Calu3 (cell line): ENCODE measurements at regions of chr10 and their contacts with region 1.

Region 1: GRCh38 chr10:67788025-67788886 is 49.7 kb downstream of the DNAJC12 start:
- DNase-seq: peak; percentile 88
- H3K4me3 Mint-ChIP-seq: peak overlapping the region; percentile 14
- H3K27ac Mint-ChIP-seq: peak overlapping the region; percentile 6
- H3K4me1 Mint-ChIP-seq: peaks cover 25% of the 10 kb centered on the region
- H3K27me3 Mint-ChIP-seq: no peaks in the 10 kb centered on the region
- CTCF ChIP-seq: peak; percentile 89

Region 2: GRCh38 chr10:67818320-67818719 is 30.1 kb after region 1 on chr10:
- CTCF ChIA-PET with region 1: interaction called, 8 read pairs
- intact Hi-C with region 1: loop called (anchors 2 kb)
- DNase-seq: peak; percentile 65
- H3K4me3 Mint-ChIP-seq: no peak overlapping the region
- H3K27ac Mint-ChIP-seq: peak overlapping the region; percentile 75
- H3K4me1 Mint-ChIP-seq: peaks cover 39% of the 10 kb centered on the region
- H3K27me3 Mint-ChIP-seq: no peaks in the 10 kb centered on the region
- CTCF ChIP-seq: no peak

Region 3: DNA sequence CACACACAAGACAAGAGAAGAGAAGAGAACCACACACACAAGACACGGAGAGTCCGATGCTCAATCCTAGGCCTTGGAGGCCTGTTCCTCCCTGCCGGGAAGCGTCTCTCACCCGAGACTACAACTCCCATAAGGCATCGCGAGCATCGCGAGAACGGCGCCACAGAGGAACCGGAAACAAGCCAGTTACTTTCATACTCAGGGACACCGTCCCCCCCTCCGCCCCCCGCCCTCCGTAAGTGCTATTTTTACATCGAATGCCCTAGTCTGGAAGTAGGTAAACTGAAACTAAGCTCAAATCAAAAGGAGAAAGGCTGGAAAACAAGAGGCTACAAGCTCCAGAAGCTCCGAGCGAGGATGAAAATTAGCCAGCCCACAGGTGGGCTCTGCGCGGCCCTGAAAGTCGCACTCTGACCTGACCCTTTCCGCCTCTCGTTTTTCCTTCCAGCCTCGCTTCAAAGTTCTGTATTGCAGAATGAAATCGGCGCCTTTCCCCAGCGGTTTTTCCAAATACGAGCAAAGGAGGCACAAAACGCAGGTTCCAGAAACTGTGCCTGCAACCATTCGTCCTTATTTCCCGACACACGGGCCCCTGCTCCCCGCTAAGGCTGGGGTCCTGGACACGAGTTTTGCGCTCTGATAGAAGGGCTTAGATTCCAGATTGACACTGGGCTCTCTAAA is 61.2 kb after region 1 on chr10:
- CTCF ChIA-PET with region 1: interaction called, 4 read pairs
- intact Hi-C with region 1: loop called (anchors 2 kb)
- DNase-seq: peak; percentile 94
- H3K4me3 Mint-ChIP-seq: peak overlapping the region; percentile 89
- H3K27ac Mint-ChIP-seq: peak overlapping the region; percentile 69
- H3K4me1 Mint-ChIP-seq: no peaks in the 10 kb centered on the region
- H3K27me3 Mint-ChIP-seq: no peaks in the 10 kb centered on the region
- CTCF ChIP-seq: no peak

Region 4: DNA sequence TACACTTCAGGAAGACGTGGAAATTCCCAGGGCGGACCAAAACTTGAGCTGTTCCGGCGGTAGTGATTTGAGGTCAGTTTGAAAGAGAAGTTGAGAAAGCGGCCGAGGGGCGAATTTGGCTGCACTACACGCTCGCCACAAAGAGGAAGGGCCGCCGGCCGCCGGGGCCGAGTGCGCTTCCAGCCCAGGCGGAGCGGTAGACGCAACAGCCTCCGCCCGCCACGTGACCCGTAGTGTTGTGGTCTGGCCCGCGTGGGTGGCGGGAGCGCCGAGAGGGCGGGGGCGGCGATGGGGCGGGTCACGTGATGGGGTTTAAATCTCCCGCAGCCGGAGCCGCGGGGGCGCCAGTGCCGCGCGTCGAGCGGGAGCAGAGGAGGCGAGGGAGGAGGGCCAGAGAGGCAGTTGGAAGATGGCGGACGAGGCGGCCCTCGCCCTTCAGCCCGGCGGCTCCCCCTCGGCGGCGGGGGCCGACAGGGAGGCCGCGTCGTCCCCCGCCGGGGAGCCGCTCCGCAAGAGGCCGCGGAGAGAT is 96.1 kb after region 1 on chr10 and contains the start of gene SIRT1:
- CTCF ChIA-PET with region 1: interaction called, 14 read pairs
- intact Hi-C with region 1: no loop called
- DNase-seq: peak; percentile 98
- H3K4me3 Mint-ChIP-seq: peak within 1 kb of the TSS; percentile 93
- H3K27ac Mint-ChIP-seq: peak within 1 kb of the TSS; percentile 97
- H3K4me1 Mint-ChIP-seq: peaks cover 20% of the 10 kb centered on the region
- H3K27me3 Mint-ChIP-seq: no peaks in the 10 kb centered on the region
- CTCF ChIP-seq: no peak
- total RNA-seq, gene SIRT1: 19.7 and 26.1 TPM in 2 replicates